ENCODE measurements at regions of chr22 and their contacts with region 1.

Region 1: GRCh38 chr22:26330966-26331625 is 98.0 kb upstream of the ASPHD2 start:
- ATAC-seq: peak; percentile 62 to 86 (median 70)
- H3K4me3 ChIP-seq: no peak overlapping the region
- H3K27ac ChIP-seq: no peak overlapping the region
- H3K4me1 ChIP-seq: peaks cover 0 to 3% of the 10 kb centered on the region in 2 donors

Region 2: GRCh38 chr22:25235547-25236290 is 1095.4 kb before region 1 on chr22:
- in situ Hi-C with region 1: loop called in 1 of 9 experiments (anchors 25 kb)
- ATAC-seq: peak; percentile 99 to 100 (median 100)
- H3K4me3 ChIP-seq: peak overlapping the region in 2 of 5 donors; percentile 4 to 17
- H3K27ac ChIP-seq: no peak overlapping the region
- H3K4me1 ChIP-seq: no peaks in the 10 kb centered on the region

Region 3: DNA sequence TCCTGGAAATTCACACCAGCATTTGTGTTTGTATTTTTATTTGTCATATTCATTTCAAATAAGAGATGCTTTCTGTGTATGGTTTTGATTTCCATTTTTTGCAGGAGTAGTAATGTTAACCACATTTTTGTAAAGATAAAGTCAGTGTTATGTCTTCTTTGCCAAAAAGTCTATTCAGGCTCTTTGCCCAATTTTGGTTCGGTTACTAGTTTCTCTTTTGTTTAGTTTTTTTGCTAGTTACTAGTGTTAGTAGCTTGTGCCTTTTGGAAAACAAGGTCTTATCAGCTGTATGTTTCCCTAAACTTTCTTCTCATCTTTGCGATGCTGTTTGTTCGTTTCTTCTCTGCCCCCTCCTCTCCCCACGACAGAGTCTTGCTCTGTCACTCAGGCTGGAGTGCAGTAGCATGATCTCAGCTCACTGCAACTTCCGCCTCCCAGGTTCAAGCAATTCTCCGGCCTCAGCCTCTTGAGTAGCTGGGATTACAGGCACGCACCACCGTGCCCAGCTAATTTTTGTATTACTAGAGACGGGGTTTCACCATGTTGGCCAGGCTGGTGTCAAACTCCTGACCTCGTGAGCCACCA is 878.9 kb before region 1 on chr22:
- in situ Hi-C with region 1: loop called in 1 of 9 experiments (anchors 25 kb)
- ATAC-seq: peak in 1 of 8 experiments; percentile 20
- H3K4me3 ChIP-seq: no peak overlapping the region
- H3K27ac ChIP-seq: no peak overlapping the region
- H3K4me1 ChIP-seq: peaks cover 14 to 18% of the 10 kb centered on the region in 2 donors

Region 4: DNA sequence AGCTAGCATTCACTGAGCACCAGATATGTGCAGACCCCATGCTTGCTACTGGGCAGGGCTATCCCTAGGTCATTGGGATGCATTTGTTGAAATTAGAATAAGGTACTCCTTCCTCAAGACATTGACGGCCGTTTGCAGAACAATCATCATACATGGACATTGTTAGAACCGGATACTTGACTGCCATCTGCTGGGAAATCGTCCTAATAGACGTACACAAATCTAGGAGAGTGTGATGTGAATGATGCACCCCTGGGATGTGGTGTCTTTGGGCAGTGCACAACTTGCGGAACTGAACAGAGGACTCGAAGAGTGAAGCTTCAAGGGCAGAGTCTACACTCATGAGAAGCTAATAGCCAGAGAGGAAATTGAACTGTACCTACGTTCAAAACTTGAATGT is 553.2 kb before region 1 on chr22:
- in situ Hi-C with region 1: loop called in 7 of 9 experiments (anchors 10 to 25 kb)
- ATAC-seq: peak in 3 of 8 experiments; percentile 73 to 81 (median 77)
- H3K4me3 ChIP-seq: no peak overlapping the region
- H3K27ac ChIP-seq: no peak overlapping the region
- H3K4me1 ChIP-seq: peaks cover 9 to 10% of the 10 kb centered on the region in 2 donors

Region 5: GRCh38 chr22:25898689-25899365 is 432.3 kb before region 1 on chr22:
- in situ Hi-C with region 1: loop called in 1 of 9 experiments (anchors 25 kb)
- ATAC-seq: peak in 2 of 8 experiments; percentile 46 to 48
- H3K4me3 ChIP-seq: no peak overlapping the region
- H3K27ac ChIP-seq: no peak overlapping the region
- H3K4me1 ChIP-seq: peaks cover 0 to 3% of the 10 kb centered on the region in 2 donors

Region 6: DNA sequence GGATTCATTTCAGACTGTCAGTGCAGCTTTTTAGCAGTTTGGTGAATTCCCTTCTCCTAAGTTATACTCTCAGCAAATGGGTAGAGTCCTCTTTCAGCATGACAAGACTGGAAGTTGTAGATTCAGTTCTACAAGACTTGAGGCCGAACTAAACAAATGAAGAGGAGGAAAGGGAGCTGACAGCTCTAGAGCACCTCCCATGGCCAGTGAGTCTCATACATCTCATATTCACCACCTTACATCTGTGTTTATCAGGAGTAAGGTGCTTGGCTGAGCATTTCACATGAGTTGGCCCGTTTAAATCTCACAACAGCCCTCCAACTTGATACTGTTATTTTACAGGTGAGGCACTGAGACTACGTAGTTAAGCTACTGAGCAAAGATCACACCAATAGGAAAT is 131.4 kb before region 1 on chr22:
- in situ Hi-C with region 1: loop called in 1 of 9 experiments (anchors 25 kb)
- ATAC-seq: no peak
- H3K4me3 ChIP-seq: no peak overlapping the region
- H3K27ac ChIP-seq: no peak overlapping the region
- H3K4me1 ChIP-seq: peaks cover 13 to 26% of the 10 kb centered on the region in 2 donors

Region 7: DNA sequence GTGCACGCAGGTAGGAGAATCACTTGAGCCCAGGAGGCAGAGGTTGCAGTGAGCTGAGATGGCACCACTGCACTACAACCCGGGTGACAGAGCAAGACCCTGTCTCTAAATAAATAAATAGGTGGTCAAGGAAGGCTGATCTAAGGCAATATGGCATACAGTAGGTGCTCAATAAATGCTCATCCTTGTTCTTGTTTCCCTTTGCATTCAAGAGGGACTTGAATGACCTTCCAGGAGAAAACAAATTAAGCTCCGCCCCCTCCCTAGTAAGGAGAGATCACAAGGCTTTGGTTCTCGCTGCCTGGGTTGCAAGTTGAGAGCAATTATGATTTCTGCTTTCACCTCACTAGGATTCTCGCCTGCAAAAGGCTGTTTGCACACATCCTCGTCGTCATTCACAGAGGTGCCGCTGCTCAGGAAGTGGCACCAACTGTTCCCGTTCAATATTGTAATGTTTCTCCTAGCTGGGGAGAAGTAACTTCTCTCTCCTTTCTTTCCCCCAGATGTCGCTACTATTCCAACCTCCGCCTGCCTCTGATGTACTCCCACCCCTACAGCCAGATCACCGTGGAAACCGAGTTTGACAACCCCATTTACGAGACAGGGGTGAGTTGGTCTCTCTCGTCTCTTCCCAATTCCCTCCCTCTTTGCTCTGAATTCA is 46.2 kb after region 1 on chr22:
- in situ Hi-C with region 1: no loop called
- ATAC-seq: peak; percentile 49 to 80 (median 70)
- H3K4me3 ChIP-seq: no peak overlapping the region
- H3K27ac ChIP-seq: no peak overlapping the region
- H3K4me1 ChIP-seq: peaks cover 21 to 28% of the 10 kb centered on the region in 2 donors

Region 8: GRCh38 chr22:26428515-26429457 is 97.7 kb after region 1 on chr22 and contains the start of gene ASPHD2:
- in situ Hi-C with region 1: no loop called
- ATAC-seq: peak; percentile 85 to 93 (median 90)
- H3K4me3 ChIP-seq: peak within 1 kb of the TSS; percentile 52 to 79 (median 73)
- H3K27ac ChIP-seq: no peak within 1 kb of the TSS
- H3K4me1 ChIP-seq: peaks cover 4 to 5% of the 10 kb centered on the region in 2 donors
- total RNA-seq, gene ASPHD2: 1.9 to 14.4 (median 6.2) TPM

Measured in motor neuron (in vitro differentiated cells).